ENCODE measurements at regions of chr15 and their contacts with region 1.

Region 1: GRCh38 chr15:89408372-89409183 is 74.0 kb upstream of the POLG start:
- DNase-seq: no peak
- H3K4me3 Mint-ChIP-seq: peak overlapping the region; percentile 82
- H3K27ac Mint-ChIP-seq: peak overlapping the region; percentile 62
- H3K4me1 Mint-ChIP-seq: peaks cover 29% of the 10 kb centered on the region
- H3K27me3 Mint-ChIP-seq: peaks cover 90% of the 10 kb centered on the region

Region 2: GRCh38 chr15:89370120-89370977 is 38.2 kb before region 1 on chr15:
- intact Hi-C with region 1: loop called (anchors 1 kb)
- DNase-seq: no peak
- H3K4me3 Mint-ChIP-seq: no peak overlapping the region
- H3K27ac Mint-ChIP-seq: no peak overlapping the region
- H3K4me1 Mint-ChIP-seq: peaks cover 3% of the 10 kb centered on the region
- H3K27me3 Mint-ChIP-seq: peaks cover 82% of the 10 kb centered on the region

Region 3: DNA sequence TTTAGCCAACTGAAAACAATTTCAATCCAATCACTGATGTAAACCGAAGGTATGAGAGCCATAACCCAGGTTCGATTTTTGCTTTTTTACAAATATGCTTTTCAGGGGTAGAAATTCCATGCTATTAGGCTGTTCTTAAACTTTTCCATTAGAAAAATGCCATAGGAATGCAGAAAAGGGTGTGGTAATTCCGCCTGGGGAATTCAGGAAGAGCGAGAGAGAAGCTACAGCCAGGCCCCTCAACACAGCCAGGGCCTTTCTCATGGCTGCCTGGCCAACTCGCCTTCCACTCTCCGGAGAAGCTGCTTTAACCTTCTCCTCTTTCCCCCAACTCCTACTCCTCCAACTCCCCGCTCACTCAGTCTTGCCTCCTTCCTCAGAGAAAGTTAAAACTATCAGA is 157.6 kb after region 1 on chr15:
- intact Hi-C with region 1: no loop called
- DNase-seq: no peak
- H3K4me3 Mint-ChIP-seq: no peak overlapping the region
- H3K27ac Mint-ChIP-seq: no peak overlapping the region
- H3K4me1 Mint-ChIP-seq: no peaks in the 10 kb centered on the region
- H3K27me3 Mint-ChIP-seq: peaks cover 35% of the 10 kb centered on the region